ENCODE measurements at regions of chr4 and their contacts with region 1.

Region 1: GRCh38 chr4:186326391-186326790 is 60.4 kb downstream of the F11 start:
- DNase-seq: no peak
- ATAC-seq: no peak
- H3K4me3 ChIP-seq: no peak overlapping the region
- H3K4me3 Mint-ChIP-seq: no peak overlapping the region
- H3K27ac ChIP-seq: no peak overlapping the region
- H3K27ac Mint-ChIP-seq: no peak overlapping the region
- H3K4me1 ChIP-seq: no peaks in the 10 kb centered on the region
- H3K4me1 Mint-ChIP-seq: no peaks in the 10 kb centered on the region
- H3K27me3 ChIP-seq: no peaks in the 10 kb centered on the region
- H3K27me3 Mint-ChIP-seq: no peaks in the 10 kb centered on the region
- CTCF ChIP-seq: no peak

Region 2: GRCh38 chr4:187504974-187505797 is 1178.8 kb after region 1 on chr4:
- CTCF ChIA-PET with region 1: no interaction called
- POLR2A ChIA-PET with region 1: no interaction called
- intact Hi-C with region 1: loop called in 1 of 2 experiments (anchors 5 kb)
- DNase-seq: no peak
- ATAC-seq: no peak
- H3K4me3 ChIP-seq: no peak overlapping the region
- H3K4me3 Mint-ChIP-seq: no peak overlapping the region
- H3K27ac ChIP-seq: no peak overlapping the region
- H3K27ac Mint-ChIP-seq: no peak overlapping the region
- H3K4me1 ChIP-seq: no peaks in the 10 kb centered on the region
- H3K4me1 Mint-ChIP-seq: no peaks in the 10 kb centered on the region
- H3K27me3 ChIP-seq: no peaks in the 10 kb centered on the region
- H3K27me3 Mint-ChIP-seq: no peaks in the 10 kb centered on the region
- CTCF ChIP-seq: no peak